Activated naive CD8-positive, alpha-beta T cell treated with anti-CD3 and anti-CD28 coated beads, Interleukin-2, amount 10 ng/mL, durations not matched to agents 7 days and 5 days (primary cell): ENCODE measurements at regions of chr17 and their contacts with region 1.

Region 1: GRCh38 chr17:4789901-4790704 is 1.3 kb downstream of the GLTPD2 start:
- DNase-seq: peak; percentile 89
- ATAC-seq: peak; percentile 95
- H3K4me3 Mint-ChIP-seq: peak overlapping the region; percentile 87
- H3K27ac Mint-ChIP-seq: peak overlapping the region; percentile 87
- H3K4me1 Mint-ChIP-seq: peaks cover 19% of the 10 kb centered on the region
- H3K27me3 Mint-ChIP-seq: peaks cover 56% of the 10 kb centered on the region

Region 2: GRCh38 chr17:4709794-4710692 is 80.1 kb before region 1 on chr17 and contains the start of gene ARRB2:
- POLR2A ChIA-PET with region 1: interaction called, 15 read pairs
- DNase-seq: peak; percentile 99
- ATAC-seq: peak; percentile 85
- H3K4me3 Mint-ChIP-seq: peak within 1 kb of the TSS; percentile 99
- H3K27ac Mint-ChIP-seq: peak within 1 kb of the TSS; percentile 99
- H3K4me1 Mint-ChIP-seq: peaks cover 52% of the 10 kb centered on the region
- H3K27me3 Mint-ChIP-seq: no peaks in the 10 kb centered on the region
- total RNA-seq, gene ARRB2: 325 to 330 TPM

Region 3: GRCh38 chr17:4721203-4722135 is 68.6 kb before region 1 on chr17:
- POLR2A ChIA-PET with region 1: no interaction called
- DNase-seq: peak; percentile 32
- ATAC-seq: peak; percentile 27
- H3K4me3 Mint-ChIP-seq: no peak overlapping the region
- H3K27ac Mint-ChIP-seq: peak overlapping the region; percentile 28
- H3K4me1 Mint-ChIP-seq: peaks cover 22% of the 10 kb centered on the region
- H3K27me3 Mint-ChIP-seq: peaks cover 3% of the 10 kb centered on the region

Region 4: GRCh38 chr17:4764595-4764994 is 25.5 kb before region 1 on chr17:
- POLR2A ChIA-PET with region 1: no interaction called
- DNase-seq: no peak
- ATAC-seq: no peak
- H3K4me3 Mint-ChIP-seq: no peak overlapping the region
- H3K27ac Mint-ChIP-seq: no peak overlapping the region
- H3K4me1 Mint-ChIP-seq: no peaks in the 10 kb centered on the region
- H3K27me3 Mint-ChIP-seq: peaks cover 18% of the 10 kb centered on the region